ENCODE measurements at regions of chr15 and their contacts with region 1.

Region 1: DNA sequence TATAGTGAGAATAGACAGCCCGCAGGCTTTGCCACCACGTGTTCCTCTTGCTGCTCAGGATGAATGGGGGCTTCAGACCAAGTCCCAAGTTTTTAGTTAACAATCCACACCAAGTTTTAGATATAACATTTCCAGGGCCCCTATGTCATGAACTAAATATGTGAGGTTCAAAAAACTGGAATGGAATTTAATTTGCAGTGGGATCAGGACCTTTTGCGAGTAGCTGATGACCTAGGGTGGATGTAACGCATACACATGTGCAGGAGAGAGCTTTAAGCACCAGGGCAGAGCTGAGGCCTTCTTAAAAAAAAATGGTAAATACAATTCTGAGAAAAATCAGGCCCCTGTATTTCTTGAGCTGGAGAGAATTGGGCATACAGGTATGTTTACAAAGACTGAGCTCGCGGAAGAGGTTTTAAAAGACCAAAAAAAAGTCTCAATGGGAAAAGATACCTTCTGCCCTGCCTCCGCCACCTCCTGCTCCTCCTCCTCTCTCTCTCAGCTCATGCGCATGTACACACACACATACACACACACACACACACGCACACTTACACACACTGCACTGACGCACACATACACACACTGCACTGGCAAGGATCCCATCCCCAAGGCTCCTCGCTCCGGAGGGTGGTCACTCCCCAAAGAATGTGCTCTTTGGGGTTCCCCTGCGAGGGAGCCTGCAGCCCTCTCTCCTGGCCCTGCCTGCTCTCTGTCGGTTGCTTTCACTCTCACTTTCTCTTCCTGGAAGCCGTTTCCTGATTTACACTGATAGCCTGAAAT is 48.2 kb upstream of the IGF1R start:
- DNase-seq: peak in 1 of 2 donors; percentile 18
- H3K4me3 ChIP-seq: peak overlapping the region; percentile 43 to 58 (median 44)
- H3K27ac ChIP-seq: peak overlapping the region; percentile 8 to 10
- H3K4me1 ChIP-seq: no peaks in the 10 kb centered on the region
- H3K27me3 ChIP-seq: peaks cover 0 to 10% of the 10 kb centered on the region in 2 donors
- CTCF ChIP-seq: no peak
- POLR2A ChIP-seq: no peak

Region 2: GRCh38 chr15:98623518-98623917 is 23.4 kb after region 1 on chr15:
- intact Hi-C with region 1: loop called (anchors 2 kb)
- DNase-seq: no peak
- H3K4me3 ChIP-seq: no peak overlapping the region
- H3K27ac ChIP-seq: no peak overlapping the region
- H3K4me1 ChIP-seq: no peaks in the 10 kb centered on the region
- H3K27me3 ChIP-seq: peaks cover 0 to 60% of the 10 kb centered on the region in 2 donors
- CTCF ChIP-seq: no peak
- POLR2A ChIP-seq: no peak